Heart left ventricle (tissue), 16 donors: ENCODE measurements at regions of chr7 and their contacts with region 1.

Region 1: DNA sequence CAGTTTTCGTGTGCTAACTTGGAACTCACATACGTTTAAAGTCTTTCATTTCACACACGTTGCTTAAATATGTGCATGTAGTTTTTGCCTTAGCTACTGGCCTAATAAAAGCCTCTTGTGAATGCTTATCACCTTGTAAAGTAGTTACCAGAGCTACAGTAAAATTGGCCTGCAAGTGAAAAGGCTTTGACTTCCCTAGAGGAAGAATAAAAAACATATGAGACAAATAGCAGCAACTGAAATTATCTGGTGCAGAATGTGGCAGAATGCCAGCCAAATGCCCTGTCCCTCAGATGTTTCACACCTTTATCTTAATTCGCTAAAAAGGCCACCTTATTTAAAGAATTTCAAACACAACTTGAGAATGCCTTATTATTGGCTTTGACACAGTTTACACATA is 28.1 kb upstream of the RPA3 start:
- DNase-seq: no peak
- ATAC-seq: peak; percentile 44 to 69 (median 58)
- H3K4me3 ChIP-seq: no peak overlapping the region
- H3K27ac ChIP-seq: peak overlapping the region in 6 of 12 donors; percentile 11 to 64 (median 46)
- H3K4me1 ChIP-seq: peaks cover 0 to 33% (median 17%) of the 10 kb centered on the region in 12 donors
- H3K27me3 ChIP-seq: no peaks in the 10 kb centered on the region
- CTCF ChIP-seq: no peak
- POLR2A ChIP-seq: no peak

Region 2: DNA sequence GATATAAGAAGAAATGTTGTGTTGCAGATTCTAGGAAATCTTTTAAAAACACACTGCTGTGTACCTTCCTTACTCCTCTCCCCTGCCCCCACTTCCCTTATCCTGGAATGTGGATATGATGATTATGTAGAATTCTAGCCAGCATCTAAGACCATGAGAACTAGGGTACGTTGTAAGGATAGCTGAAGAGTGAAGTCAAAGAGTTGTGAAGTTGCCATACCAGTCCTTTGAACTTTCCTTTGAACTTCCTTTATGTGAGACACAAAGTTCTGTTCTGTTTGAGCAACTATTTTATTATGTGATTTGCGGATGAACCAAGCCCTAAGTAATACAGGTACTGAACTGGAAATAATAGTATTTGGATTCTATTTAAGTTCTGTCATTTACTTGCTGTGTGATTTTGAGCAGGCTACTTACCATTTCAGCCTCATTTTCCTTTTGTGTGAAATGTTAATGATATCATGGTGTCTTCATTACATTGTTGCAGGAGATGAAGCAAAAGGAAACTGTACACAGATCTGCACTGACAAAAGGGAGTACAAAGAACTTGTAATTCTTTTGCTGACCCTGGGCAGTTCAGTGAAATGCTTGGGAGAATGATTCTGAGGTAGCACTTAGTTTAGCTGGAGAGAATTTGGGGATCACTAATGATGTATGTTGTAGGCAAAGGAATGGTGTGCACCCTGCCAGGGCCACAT is 59.5 kb before region 1 on chr7:
- intact Hi-C with region 1: loop called in 2 of 10 experiments (anchors 5 kb)
- DNase-seq: no peak
- ATAC-seq: peak in 1 of 4 donors; percentile 8
- H3K4me3 ChIP-seq: peak overlapping the region in 1 of 12 donors; percentile 0
- H3K27ac ChIP-seq: peak overlapping the region in 11 of 12 donors; percentile 39 to 81 (median 71)
- H3K4me1 ChIP-seq: peaks cover 0 to 43% (median 29%) of the 10 kb centered on the region in 12 donors
- H3K27me3 ChIP-seq: no peaks in the 10 kb centered on the region
- CTCF ChIP-seq: no peak
- POLR2A ChIP-seq: no peak

Region 3: GRCh38 chr7:7707806-7708205 is 38.7 kb before region 1 on chr7:
- intact Hi-C with region 1: loop called in 3 of 10 experiments (anchors 5 kb)
- DNase-seq: no peak
- ATAC-seq: peak in 1 of 4 donors; percentile 12
- H3K4me3 ChIP-seq: no peak overlapping the region
- H3K27ac ChIP-seq: peak overlapping the region in 1 of 12 donors; percentile 21
- H3K4me1 ChIP-seq: peaks cover 0 to 44% (median 28%) of the 10 kb centered on the region in 12 donors
- H3K27me3 ChIP-seq: no peaks in the 10 kb centered on the region
- CTCF ChIP-seq: no peak
- POLR2A ChIP-seq: no peak

Region 4: GRCh38 chr7:8549046-8549445 is 802.6 kb after region 1 on chr7:
- intact Hi-C with region 1: no loop called
- DNase-seq: no peak
- ATAC-seq: no peak
- H3K4me3 ChIP-seq: no peak overlapping the region
- H3K27ac ChIP-seq: no peak overlapping the region
- H3K4me1 ChIP-seq: no peaks in the 10 kb centered on the region
- H3K27me3 ChIP-seq: no peaks in the 10 kb centered on the region
- CTCF ChIP-seq: no peak
- POLR2A ChIP-seq: no peak